ENCODE measurements at regions of chr10 and their contacts with region 1.

Region 1: DNA sequence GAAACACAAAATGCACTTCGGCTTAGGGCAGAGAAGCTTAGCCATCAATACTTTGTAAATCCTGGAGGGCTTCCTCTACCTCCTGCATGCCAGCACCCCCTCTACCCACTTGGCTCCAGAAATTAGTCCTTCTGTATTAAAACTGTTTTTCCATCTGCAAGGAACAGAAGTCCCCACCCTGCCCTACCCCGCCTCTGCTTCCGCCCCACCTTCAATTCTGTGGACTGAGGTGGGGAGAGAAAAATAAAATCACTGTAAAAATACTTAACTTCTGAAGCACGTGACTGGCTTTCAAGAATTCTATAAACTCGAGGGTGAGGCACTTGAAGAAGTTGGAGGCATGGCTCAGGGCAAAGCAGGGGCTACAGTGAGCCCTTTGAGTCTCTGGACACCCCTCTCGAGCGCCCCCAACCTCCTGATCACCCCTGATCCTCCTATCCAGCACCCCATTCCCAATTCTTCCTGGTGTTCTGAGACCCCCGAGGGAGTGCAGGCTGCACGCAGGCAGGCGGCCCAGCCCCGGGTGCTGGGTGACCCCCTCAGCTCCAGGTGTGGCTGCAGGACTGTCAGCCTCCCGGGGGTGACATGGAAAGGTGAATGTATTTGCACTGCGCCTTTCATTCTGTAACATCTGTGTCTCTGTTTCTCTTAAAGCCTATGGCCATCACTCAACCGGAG is 7.3 kb upstream of the KIAA1217 start:
- DNase-seq: no peak
- H3K4me3 ChIP-seq: no peak overlapping the region
- H3K4me3 Mint-ChIP-seq: no peak overlapping the region
- H3K27ac Mint-ChIP-seq: peak overlapping the region; percentile 28
- H3K4me1 ChIP-seq: peaks cover 21% of the 10 kb centered on the region
- H3K4me1 Mint-ChIP-seq: peaks cover 28% of the 10 kb centered on the region
- H3K27me3 ChIP-seq: no peaks in the 10 kb centered on the region
- H3K27me3 Mint-ChIP-seq: no peaks in the 10 kb centered on the region
- CTCF ChIP-seq: no peak

Region 2: DNA sequence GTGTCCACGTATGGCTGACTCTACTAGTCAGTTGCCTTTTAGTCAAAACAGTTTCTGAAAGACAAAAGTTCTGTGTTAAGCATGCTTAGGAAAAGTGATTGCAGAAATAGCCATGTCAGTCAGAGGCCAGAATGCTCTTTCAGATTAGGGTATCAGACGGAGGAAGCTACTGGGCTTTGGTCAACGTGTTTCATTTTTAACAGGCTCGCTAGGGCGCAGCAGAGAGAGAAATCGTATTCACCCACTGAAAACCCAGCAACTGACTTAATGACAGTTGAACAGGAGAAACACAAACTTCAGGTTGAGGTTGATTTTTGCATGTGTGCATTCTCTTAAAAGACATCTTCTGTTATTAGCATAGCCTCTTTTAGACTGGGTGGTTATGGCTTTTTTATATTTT is 315.3 kb before region 1 on chr10:
- CTCF ChIA-PET with region 1: no interaction called
- POLR2A ChIA-PET with region 1: no interaction called
- intact Hi-C with region 1: loop called (anchors 1 kb)
- DNase-seq: peak in 1 of 2 experiments; percentile 46
- H3K4me3 ChIP-seq: no peak overlapping the region
- H3K4me3 Mint-ChIP-seq: no peak overlapping the region
- H3K27ac Mint-ChIP-seq: no peak overlapping the region
- H3K4me1 ChIP-seq: no peaks in the 10 kb centered on the region
- H3K4me1 Mint-ChIP-seq: no peaks in the 10 kb centered on the region
- H3K27me3 ChIP-seq: 0 out of 2 replicates have a peak, but pooled peaks cover 1% of the 10 kb centered on the region
- H3K27me3 Mint-ChIP-seq: peaks cover 15% of the 10 kb centered on the region
- CTCF ChIP-seq: peak; percentile 22 to 44

Region 3: DNA sequence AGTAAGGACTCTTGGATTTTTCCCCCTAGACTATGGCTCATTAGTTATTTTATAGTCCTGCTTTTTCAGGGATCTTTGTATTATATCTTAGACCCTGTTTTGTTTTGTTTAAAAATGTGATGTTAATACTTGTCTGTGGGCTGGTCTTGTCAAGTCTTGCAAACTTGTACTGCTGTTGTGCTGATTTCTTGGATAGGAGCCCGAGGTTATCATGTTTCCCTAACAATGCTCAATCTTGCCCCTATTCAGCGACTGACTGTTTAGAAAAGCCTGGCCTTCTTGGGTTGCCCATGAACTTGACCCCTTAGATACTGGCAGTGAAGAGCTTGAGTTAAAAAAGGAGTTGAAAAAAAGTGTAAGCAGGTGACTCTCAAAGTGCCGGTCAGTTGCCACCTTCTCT is 123.0 kb after region 1 on chr10:
- CTCF ChIA-PET with region 1: interaction called, 3 read pairs
- POLR2A ChIA-PET with region 1: no interaction called
- intact Hi-C with region 1: loop called (anchors 1 kb)
- DNase-seq: no peak
- H3K4me3 ChIP-seq: no peak overlapping the region
- H3K4me3 Mint-ChIP-seq: no peak overlapping the region
- H3K27ac Mint-ChIP-seq: no peak overlapping the region
- H3K4me1 ChIP-seq: no peaks in the 10 kb centered on the region
- H3K4me1 Mint-ChIP-seq: peaks cover 5% of the 10 kb centered on the region
- H3K27me3 ChIP-seq: no peaks in the 10 kb centered on the region
- H3K27me3 Mint-ChIP-seq: no peaks in the 10 kb centered on the region
- CTCF ChIP-seq: no peak

Region 4: DNA sequence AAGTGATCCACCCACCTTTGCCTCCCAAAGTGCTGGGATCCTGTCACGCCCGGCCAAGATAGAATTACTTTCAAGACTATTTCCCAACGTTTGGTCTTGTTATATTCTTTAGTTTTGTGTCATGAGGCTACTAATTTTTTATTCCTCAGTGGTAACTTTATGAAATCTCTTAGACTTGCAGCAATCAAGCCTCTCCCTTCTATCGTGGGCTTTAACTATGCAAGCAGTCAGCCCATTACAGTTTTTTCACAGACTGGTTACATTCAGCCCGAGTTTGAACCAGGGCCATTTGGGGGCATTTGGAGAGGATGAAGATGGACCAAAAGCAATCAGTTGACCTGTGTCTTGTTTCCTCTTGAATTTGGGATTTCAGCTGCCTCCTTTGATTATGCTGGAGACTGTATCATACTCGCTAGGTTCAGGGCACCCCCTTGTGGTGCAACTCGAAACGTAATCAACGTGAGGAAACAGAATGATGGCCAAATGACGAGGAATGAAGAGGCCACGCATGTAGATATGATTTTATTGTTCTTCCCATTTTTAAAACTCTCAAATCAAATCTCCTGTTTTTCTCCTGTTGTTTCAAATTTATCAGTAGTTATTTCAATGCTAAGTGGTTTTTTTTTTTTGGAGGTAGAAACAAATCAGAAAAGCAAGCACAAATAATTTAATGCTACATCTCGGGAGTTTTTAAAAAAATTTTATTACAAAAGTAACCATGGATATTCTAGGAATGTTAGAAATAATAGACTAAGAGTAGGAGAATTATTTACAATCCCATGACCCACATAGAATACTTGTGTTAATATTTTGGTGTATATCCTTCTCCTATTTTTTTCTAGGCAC is 158.9 kb after region 1 on chr10:
- CTCF ChIA-PET with region 1: no interaction called
- POLR2A ChIA-PET with region 1: no interaction called
- intact Hi-C with region 1: loop called (anchors 1 kb)
- DNase-seq: peak; percentile 75 to 84
- H3K4me3 ChIP-seq: no peak overlapping the region
- H3K4me3 Mint-ChIP-seq: no peak overlapping the region
- H3K27ac Mint-ChIP-seq: peak overlapping the region; percentile 36
- H3K4me1 ChIP-seq: no peaks in the 10 kb centered on the region
- H3K4me1 Mint-ChIP-seq: peaks cover 7% of the 10 kb centered on the region
- H3K27me3 ChIP-seq: no peaks in the 10 kb centered on the region
- H3K27me3 Mint-ChIP-seq: no peaks in the 10 kb centered on the region
- CTCF ChIP-seq: peak; percentile 91 to 92

Region 5: GRCh38 chr10:24680647-24681524 is 479.2 kb after region 1 on chr10:
- CTCF ChIA-PET with region 1: no interaction called
- POLR2A ChIA-PET with region 1: no interaction called
- intact Hi-C with region 1: no loop called
- DNase-seq: peak in 1 of 2 experiments; percentile 64
- H3K4me3 ChIP-seq: no peak overlapping the region
- H3K4me3 Mint-ChIP-seq: peak overlapping the region; percentile 58
- H3K27ac Mint-ChIP-seq: peak overlapping the region; percentile 20
- H3K4me1 ChIP-seq: peaks cover 25% of the 10 kb centered on the region
- H3K4me1 Mint-ChIP-seq: peaks cover 19% of the 10 kb centered on the region
- H3K27me3 ChIP-seq: no peaks in the 10 kb centered on the region
- H3K27me3 Mint-ChIP-seq: no peaks in the 10 kb centered on the region
- CTCF ChIP-seq: no peak